CD8-positive, alpha-beta T cell (primary cell): ENCODE measurements at regions of chr12 and their contacts with region 1.

Region 1: DNA sequence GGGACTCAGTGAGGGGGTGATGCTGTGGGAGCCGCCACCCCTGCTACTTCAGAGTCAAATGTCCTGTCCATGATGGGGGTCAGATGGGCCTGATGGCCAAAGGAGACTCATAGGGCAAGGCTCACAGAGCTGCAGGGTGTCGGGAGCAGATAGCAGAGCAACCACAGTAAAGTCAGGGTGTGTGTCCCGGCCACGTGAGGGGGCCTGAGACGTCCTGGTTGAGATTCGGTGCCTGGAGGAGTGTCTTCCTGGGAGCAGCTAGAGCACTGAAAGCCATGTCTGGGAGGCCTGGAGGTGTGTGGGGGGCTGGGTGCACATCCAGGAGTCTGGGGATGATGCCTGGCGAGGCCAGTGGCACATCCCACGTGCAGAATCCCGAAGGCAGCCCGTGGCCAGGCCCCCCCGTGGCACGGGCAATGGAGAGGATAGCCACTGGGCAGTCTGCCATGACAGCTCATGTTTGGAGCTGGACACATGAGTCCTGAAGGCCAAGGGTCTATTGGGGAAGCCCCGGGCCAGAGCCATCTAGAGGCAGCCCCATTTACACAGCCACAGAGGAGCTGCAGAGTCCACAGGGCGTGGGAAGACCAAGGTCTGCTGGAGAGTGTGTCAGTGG is 308.0 kb upstream of the SFSWAP start:
- DNase-seq: no peak
- ATAC-seq: no peak
- H3K4me3 ChIP-seq: no peak overlapping the region
- H3K4me3 Mint-ChIP-seq: no peak overlapping the region
- H3K27ac ChIP-seq: no peak overlapping the region
- H3K27ac Mint-ChIP-seq: no peak overlapping the region
- H3K4me1 ChIP-seq: no peaks in the 10 kb centered on the region
- H3K4me1 Mint-ChIP-seq: no peaks in the 10 kb centered on the region
- H3K27me3 ChIP-seq: no peaks in the 10 kb centered on the region
- H3K27me3 Mint-ChIP-seq: no peaks in the 10 kb centered on the region
- CTCF ChIP-seq: no peak

Region 2: DNA sequence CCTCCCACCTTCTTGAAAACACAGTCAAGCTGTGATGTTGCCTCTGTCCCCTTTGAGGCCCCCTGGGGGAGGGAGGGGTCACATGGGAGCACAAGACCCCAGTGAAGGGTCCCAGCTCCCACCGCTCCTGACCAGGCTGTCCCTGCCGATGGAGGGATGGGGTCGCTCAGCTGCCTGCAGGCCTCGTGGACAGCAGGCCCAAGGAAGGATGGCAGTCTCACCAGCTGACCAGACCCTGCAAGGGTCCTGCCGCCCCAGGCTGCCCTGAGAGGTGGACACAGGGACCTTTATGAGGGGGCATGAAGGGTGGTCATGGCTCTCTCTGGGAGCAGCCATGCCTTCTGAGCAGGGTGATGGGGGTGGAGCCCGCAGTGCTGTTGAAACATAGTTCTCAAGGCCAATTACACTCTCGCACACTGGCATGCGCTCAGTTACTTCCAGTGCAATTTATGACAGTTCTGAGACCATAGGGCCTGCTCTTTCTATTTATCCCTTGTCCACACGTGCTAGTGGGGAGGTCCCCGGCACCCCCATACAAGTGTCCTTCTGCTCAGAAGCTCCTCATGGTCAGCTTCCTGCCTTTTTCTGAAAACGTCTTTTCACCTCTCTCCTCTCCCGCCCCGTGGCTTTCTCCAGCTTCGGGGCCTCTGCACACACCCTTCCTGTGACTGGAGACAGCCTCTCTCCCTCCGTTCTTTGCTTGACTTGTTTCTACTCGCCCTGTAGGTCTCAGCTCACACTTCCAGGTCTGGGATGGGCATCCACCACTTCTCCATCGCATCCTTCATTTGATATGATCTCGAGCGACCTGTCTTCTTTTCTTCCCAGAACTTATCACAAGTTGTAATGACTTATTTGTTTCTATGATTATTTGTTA is 136.1 kb before region 1 on chr12:
- CTCF ChIA-PET with region 1: no interaction called
- POLR2A ChIA-PET with region 1: no interaction called
- intact Hi-C with region 1: loop called in 1 of 2 experiments (anchors 2 kb)
- DNase-seq: no peak
- ATAC-seq: no peak
- H3K4me3 ChIP-seq: no peak overlapping the region
- H3K4me3 Mint-ChIP-seq: no peak overlapping the region
- H3K27ac ChIP-seq: no peak overlapping the region
- H3K27ac Mint-ChIP-seq: no peak overlapping the region
- H3K4me1 ChIP-seq: no peaks in the 10 kb centered on the region
- H3K4me1 Mint-ChIP-seq: no peaks in the 10 kb centered on the region
- H3K27me3 ChIP-seq: no peaks in the 10 kb centered on the region
- H3K27me3 Mint-ChIP-seq: no peaks in the 10 kb centered on the region
- CTCF ChIP-seq: no peak